ENCODE measurements at regions of chr17 and their contacts with region 1.

Region 1: GRCh38 chr17:9575381-9576101 is at the start of gene STX8:
- DNase-seq: peak; percentile 86
- ATAC-seq: peak; percentile 81
- H3K4me3 Mint-ChIP-seq: peak within 1 kb of the TSS; percentile 96
- H3K27ac Mint-ChIP-seq: peak within 1 kb of the TSS; percentile 89
- H3K4me1 Mint-ChIP-seq: peaks cover 25% of the 10 kb centered on the region
- H3K27me3 Mint-ChIP-seq: no peaks in the 10 kb centered on the region
- total RNA-seq, gene STX8: 71.0 to 78.5 TPM

Region 2: DNA sequence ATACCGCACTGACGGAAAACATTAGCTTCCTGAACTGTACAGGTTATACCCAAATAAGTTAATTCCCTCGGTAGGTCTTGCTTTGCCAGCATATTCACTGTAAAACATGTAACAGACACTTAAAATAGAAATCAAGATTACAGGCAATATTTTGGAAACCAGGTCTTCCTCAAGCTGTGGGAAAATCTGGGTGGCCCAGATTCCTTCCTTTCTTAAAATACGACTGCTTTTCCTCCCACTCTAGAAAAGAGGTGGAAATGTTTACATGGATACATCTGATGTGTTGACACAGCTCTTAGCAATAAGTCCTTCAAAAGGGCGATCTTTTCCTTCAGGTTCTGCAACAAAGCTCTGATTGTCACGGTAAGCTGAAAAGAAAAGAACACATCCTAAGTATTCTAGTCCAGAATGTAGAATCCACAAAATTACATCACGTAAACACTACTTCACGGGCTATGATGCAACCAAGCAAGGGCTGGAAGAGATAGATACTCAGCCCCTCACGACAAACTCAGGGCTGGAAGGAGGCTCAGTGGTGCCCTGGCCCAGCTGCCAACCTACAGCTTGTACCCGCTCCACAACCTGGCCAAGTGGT is 18.3 kb before region 1 on chr17:
- CTCF ChIA-PET with region 1: interaction called, 19 read pairs
- POLR2A ChIA-PET with region 1: interaction called, 3 read pairs
- DNase-seq: no peak
- ATAC-seq: no peak
- H3K4me3 Mint-ChIP-seq: no peak overlapping the region
- H3K27ac Mint-ChIP-seq: no peak overlapping the region
- H3K4me1 Mint-ChIP-seq: no peaks in the 10 kb centered on the region
- H3K27me3 Mint-ChIP-seq: no peaks in the 10 kb centered on the region

Region 3: GRCh38 chr17:9676742-9677387 is 101.3 kb after region 1 on chr17:
- CTCF ChIA-PET with region 1: interaction called, 25 read pairs
- POLR2A ChIA-PET with region 1: no interaction called
- DNase-seq: no peak
- ATAC-seq: no peak
- H3K4me3 Mint-ChIP-seq: no peak overlapping the region
- H3K27ac Mint-ChIP-seq: no peak overlapping the region
- H3K4me1 Mint-ChIP-seq: no peaks in the 10 kb centered on the region
- H3K27me3 Mint-ChIP-seq: peaks cover 6% of the 10 kb centered on the region

Region 4: GRCh38 chr17:9768381-9768934 is 192.9 kb after region 1 on chr17:
- CTCF ChIA-PET with region 1: interaction called, 19 read pairs
- POLR2A ChIA-PET with region 1: no interaction called
- DNase-seq: no peak
- ATAC-seq: no peak
- H3K4me3 Mint-ChIP-seq: no peak overlapping the region
- H3K27ac Mint-ChIP-seq: no peak overlapping the region
- H3K4me1 Mint-ChIP-seq: no peaks in the 10 kb centered on the region
- H3K27me3 Mint-ChIP-seq: peaks cover 6% of the 10 kb centered on the region

Measured in activated CD8-positive, alpha-beta T cell treated with anti-CD3 and anti-CD28 coated beads, Interleukin-2, amount 10 ng/mL, durations not matched to agents 7 days and 5 days (primary cell).